HEK293T (cell line): ENCODE measurements at regions of chr6 and their contacts with region 1.

Region 1: GRCh38 chr6:116268589-116269293 is 11.0 kb downstream of the TSPYL1 start:
- DNase-seq: peak; percentile 65

Region 2: GRCh38 chr6:116190550-116190949 is 78.2 kb before region 1 on chr6:
- CTCF ChIA-PET with region 1: no interaction called
- POLR2A ChIA-PET with region 1: no interaction called
- DNase-seq: no peak

Region 3: DNA sequence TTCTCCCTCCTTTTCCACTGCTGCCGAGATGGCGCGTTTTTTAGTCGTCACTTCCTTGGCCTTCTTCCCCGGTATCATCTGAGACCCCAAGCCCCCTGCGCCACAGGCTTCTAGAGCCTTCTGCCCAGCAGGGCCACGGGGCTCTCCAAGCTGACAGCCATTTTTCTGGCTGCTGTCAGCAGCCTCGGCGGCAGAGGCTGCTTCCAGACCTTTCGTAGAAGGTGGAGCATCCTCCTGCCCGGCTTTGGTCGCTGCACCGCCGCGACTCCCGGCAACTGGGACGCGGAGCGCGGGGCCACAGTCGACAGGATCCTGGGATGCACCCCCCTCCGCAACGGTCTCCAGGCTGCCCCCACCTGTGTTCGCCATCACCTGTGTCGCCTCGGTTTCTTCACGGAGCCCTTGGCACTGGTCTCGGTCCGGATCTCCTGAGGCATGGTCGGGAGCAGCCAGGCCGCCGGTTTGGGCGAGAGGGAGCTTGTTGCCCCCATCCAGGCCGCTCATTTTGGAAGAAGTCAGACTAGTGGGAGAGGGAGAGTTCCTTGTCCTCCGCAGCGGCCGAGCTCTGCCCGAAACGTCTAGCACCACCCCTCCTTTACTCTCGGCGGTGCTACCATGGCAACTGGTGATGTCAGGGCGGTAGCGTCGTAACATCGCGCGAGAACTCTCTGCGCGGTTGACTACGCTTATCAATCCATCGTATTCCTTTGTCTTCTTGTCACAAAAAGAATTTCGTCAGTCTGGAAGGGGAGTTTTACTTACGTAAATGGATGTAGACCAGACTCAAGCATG is 15.0 kb before region 1 on chr6 and contains the start of gene TSPYL4:
- CTCF ChIA-PET with region 1: interaction called, 8 read pairs
- POLR2A ChIA-PET with region 1: interaction called, 18 read pairs
- DNase-seq: peak; percentile 96

Region 4: DNA sequence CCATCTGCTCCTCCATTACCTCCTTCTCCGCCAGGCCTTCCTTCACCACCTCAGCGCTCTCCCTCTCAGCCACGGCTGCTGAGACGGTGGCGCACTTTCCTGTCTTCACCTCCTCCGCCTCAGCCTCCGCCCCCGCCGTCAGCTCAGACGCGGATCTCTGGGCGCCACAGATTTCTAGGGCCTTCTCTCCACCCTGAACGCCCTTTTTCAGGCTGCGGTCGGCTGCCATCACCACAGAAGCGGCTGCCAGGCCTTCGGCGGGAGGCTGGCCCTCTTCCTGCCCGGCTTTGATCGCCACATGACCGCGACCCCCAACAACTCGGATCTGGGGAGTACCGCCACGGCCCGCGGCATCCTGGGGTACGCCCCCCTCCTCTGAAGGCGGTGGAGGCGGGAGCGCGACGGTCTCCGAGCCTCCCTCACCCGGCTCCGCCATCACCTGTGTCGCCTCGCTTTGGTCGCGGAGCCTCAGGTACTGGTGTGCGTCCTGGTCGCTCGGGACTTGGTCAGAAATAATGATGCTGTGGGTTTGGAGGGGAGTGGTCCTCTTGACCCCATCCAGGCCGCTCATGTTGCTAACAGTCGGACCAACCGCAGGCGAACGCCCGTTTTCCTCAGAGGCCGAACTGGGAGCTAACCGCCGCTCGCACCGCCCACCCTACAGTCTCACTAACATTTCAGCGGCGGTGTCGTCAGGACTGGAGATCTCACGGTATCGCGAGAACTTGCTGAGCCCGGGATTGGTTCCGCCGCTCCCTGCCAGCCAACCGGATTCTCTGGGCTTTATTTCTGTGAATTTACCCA is 10.7 kb after region 1 on chr6 and contains the start of gene TSPYL1:
- CTCF ChIA-PET with region 1: interaction called, 29 read pairs
- POLR2A ChIA-PET with region 1: interaction called, 10 read pairs
- DNase-seq: peak; percentile 95

Region 5: GRCh38 chr6:116413357-116413756 is 144.6 kb after region 1 on chr6:
- CTCF ChIA-PET with region 1: no interaction called
- POLR2A ChIA-PET with region 1: no interaction called
- DNase-seq: no peak

Region 6: GRCh38 chr6:116561377-116562018 is 292.8 kb after region 1 on chr6:
- CTCF ChIA-PET with region 1: interaction called, 17 read pairs
- POLR2A ChIA-PET with region 1: no interaction called
- DNase-seq: peak; percentile 73

Region 7: GRCh38 chr6:116570856-116571682 is 302.3 kb after region 1 on chr6 and contains the start of gene RWDD1:
- CTCF ChIA-PET with region 1: interaction called, 13 read pairs
- POLR2A ChIA-PET with region 1: interaction called, 3 read pairs
- DNase-seq: peak; percentile 98